Heart left ventricle (tissue), 16 donors: ENCODE measurements at regions of chr14 and their contacts with region 1.

Region 1: GRCh38 chr14:92680781-92681650 is 67.4 kb downstream of the LGMN start:
- DNase-seq: peak; percentile 64 to 86 (median 72)
- ATAC-seq: peak; percentile 27 to 73 (median 64)
- H3K4me3 ChIP-seq: no peak overlapping the region
- H3K27ac ChIP-seq: peak overlapping the region in 1 of 12 donors; percentile 64
- H3K4me1 ChIP-seq: peaks cover 0 to 25% (median 5%) of the 10 kb centered on the region in 12 donors
- H3K27me3 ChIP-seq: no peaks in the 10 kb centered on the region
- CTCF ChIP-seq: peak; percentile 82 to 93 (median 89)
- POLR2A ChIP-seq: no peak

Region 2: DNA sequence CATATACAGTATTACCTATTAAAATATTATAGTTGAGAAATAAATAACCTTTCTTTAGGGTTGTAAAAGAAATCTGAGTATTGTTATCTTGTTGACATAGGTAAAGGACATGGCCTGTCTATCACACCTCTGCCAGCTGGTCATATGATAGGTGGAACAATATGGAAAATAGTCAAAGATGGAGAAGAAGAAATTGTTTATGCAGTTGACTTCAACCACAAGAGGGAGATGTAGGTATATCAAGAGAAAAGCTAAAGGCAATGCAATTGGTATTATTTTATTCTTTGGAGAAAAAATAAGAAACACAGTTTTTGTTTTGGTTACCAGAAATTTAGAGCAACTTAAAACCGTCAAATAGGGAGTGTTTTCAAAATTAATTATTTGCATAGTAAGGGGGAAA is 545.7 kb before region 1 on chr14:
- intact Hi-C with region 1: loop called in 4 of 10 experiments (anchors 10 kb)
- DNase-seq: no peak
- ATAC-seq: no peak
- H3K4me3 ChIP-seq: no peak overlapping the region
- H3K27ac ChIP-seq: no peak overlapping the region
- H3K4me1 ChIP-seq: peaks cover 0 to 3% (median 0%) of the 10 kb centered on the region in 12 donors
- H3K27me3 ChIP-seq: no peaks in the 10 kb centered on the region
- CTCF ChIP-seq: peak; percentile 26 to 60 (median 46)
- POLR2A ChIP-seq: no peak

Region 3: DNA sequence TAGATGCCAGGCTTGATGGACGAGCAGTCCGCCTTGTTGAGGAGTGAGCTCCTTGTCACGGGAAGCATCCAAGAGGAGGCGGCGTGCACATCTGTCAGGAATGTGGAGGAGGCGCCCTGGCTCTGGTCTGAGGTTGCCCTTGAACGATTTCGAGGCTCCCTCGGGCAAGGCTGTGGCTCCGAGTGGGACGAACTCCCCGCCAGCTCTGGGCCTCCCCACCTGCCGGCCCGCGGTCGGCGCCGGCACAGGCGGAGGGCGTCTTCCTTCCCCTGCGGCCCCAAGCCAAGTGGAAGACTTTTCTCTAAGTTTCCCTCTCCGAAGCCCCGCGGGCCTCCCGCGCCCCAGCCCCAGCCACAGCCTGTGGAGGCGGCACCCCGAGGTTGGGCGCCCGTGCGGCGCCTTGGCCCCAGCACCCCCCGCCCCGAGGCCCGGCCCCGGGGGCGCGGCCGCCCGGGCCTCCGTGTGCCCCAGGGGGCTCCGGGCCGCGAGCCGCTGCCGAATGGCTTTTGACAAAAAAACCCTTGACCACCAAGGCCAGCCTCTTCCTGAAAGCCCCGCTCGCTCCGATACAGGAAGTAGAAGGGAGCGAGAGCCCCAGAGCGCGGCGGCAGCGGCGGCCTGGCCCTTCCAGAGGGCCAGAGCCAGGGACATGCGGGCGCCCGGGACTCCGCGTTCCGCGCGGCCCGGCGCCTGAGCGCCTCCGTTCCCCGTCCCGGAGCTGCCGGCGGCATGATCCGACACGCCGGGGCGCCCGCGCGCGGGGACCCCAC is 167.6 kb before region 1 on chr14 and contains the start of gene RIN3:
- intact Hi-C with region 1: loop called in 1 of 10 experiments (anchors 5 kb)
- DNase-seq: peak; percentile 69 to 88 (median 77)
- ATAC-seq: peak in 3 of 4 donors; percentile 56 to 73 (median 71)
- H3K4me3 ChIP-seq: peak within 1 kb of the TSS; percentile 65 to 94 (median 78)
- H3K27ac ChIP-seq: peak within 1 kb of the TSS; percentile 80 to 95 (median 87)
- H3K4me1 ChIP-seq: peaks cover 0 to 72% (median 25%) of the 10 kb centered on the region in 12 donors
- H3K27me3 ChIP-seq: no peaks in the 10 kb centered on the region
- CTCF ChIP-seq: no peak
- POLR2A ChIP-seq: peak in 1 of 2 donors; percentile 37
- total RNA-seq, gene RIN3: 9.7 to 37.0 (median 14.6) TPM

Region 4: DNA sequence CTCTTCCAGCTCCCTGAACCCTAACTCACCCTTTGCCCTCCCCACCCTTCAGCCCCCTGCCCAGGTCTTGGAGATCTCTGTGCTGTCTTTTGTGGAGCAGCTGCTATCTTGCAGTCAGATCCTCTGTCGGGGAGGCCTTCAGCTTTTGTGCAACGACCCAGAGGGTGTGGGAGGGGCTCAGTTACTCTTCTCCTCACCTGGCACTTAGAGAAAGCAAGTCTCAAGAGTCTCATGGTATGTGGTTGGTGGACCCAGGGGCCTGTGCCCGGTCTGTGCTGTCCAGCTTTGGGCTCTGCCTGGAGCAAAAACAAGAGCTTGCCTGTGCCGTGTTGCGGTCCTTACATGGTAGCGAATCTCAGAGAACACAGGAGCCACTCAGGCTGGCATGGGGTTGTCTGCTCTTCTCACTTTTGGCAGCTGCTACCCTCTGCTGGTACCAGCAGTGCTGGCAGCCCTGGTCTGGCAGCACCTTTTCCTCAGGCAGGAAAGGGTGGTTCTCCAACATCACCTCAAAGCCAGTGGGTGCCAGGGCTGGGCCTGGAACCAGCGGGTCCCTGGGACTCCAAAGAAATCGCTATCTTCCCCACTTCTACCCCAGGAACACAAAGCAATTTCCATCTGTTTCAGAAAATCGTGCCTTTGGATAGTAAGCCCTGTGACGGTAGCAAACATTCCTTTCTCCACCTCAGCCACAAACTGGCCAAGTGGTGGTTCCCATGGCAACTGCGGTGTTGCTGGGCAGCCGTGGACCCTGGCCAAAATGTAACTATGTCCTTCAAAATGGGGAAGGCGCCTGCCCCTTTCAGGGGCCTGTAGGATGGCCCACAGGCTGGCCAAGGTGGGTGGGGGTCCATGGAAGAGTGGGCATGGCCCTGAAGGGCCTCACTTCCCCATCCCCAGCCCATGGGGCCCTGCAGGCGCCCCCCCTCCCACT is 77.4 kb before region 1 on chr14:
- intact Hi-C with region 1: loop called in 3 of 10 experiments (anchors 5 to 10 kb)
- DNase-seq: peak in 4 of 5 donors; percentile 50 to 74 (median 64)
- ATAC-seq: peak; percentile 88 to 93 (median 90)
- H3K4me3 ChIP-seq: no peak overlapping the region
- H3K27ac ChIP-seq: peak overlapping the region in 7 of 12 donors; percentile 8 to 89 (median 45)
- H3K4me1 ChIP-seq: peaks cover 0 to 31% (median 23%) of the 10 kb centered on the region in 12 donors
- H3K27me3 ChIP-seq: no peaks in the 10 kb centered on the region
- CTCF ChIP-seq: peak in 11 of 12 donors; percentile 21 to 59 (median 39)
- POLR2A ChIP-seq: no peak